PC-9 (cell line): ENCODE measurements at regions of chr15 and their contacts with region 1.

Region 1: GRCh38 chr15:98666841-98667240 is 18.5 kb downstream of the IGF1R start:
- DNase-seq: no peak
- H3K4me3 ChIP-seq: no peak overlapping the region
- H3K27ac ChIP-seq: no peak overlapping the region; the same call in 1 of the 2 replicates
- H3K4me1 ChIP-seq: peaks cover 32% of the 10 kb centered on the region
- H3K27me3 ChIP-seq: no peaks in the 10 kb centered on the region
- CTCF ChIP-seq: no peak

Region 2: GRCh38 chr15:98304371-98304770 is 362.5 kb before region 1 on chr15:
- CTCF ChIA-PET with region 1: no interaction called
- POLR2A ChIA-PET with region 1: no interaction called
- intact Hi-C with region 1: no loop called
- DNase-seq: no peak
- H3K4me3 ChIP-seq: no peak overlapping the region
- H3K27ac ChIP-seq: no peak overlapping the region
- H3K4me1 ChIP-seq: no peaks in the 10 kb centered on the region
- H3K27me3 ChIP-seq: peaks cover 91% of the 10 kb centered on the region
- CTCF ChIP-seq: no peak

Region 3: DNA sequence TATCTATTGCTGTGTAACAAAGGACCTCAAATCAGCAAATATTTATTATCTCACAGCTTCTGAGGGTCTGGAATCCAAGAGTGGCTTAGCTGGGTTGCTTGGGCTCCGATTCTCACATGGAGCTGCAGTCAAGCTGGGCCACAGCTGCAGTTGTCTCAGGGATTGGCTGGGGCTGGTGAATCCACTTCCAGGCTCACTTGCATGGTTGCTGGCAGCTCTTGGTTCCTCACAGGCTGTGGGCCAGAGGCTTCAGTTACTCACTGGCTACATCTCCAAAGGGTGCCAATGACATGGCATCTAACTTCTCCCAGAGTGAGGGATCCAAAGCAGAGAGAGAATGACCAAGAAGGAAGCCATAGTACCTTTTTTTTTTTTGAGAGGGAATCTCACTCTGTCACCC is 424.1 kb after region 1 on chr15:
- CTCF ChIA-PET with region 1: no interaction called
- POLR2A ChIA-PET with region 1: interaction called, 10 read pairs
- intact Hi-C with region 1: no loop called
- DNase-seq: no peak
- H3K4me3 ChIP-seq: no peak overlapping the region
- H3K27ac ChIP-seq: no peak overlapping the region
- H3K4me1 ChIP-seq: no peaks in the 10 kb centered on the region
- H3K27me3 ChIP-seq: peaks cover 8% of the 10 kb centered on the region; the same call in 1 of the 2 replicates
- CTCF ChIP-seq: no peak